Left cardiac atrium (tissue), 4 donors: ENCODE measurements at regions of chr16 and their contacts with region 1.

Region 1: DNA sequence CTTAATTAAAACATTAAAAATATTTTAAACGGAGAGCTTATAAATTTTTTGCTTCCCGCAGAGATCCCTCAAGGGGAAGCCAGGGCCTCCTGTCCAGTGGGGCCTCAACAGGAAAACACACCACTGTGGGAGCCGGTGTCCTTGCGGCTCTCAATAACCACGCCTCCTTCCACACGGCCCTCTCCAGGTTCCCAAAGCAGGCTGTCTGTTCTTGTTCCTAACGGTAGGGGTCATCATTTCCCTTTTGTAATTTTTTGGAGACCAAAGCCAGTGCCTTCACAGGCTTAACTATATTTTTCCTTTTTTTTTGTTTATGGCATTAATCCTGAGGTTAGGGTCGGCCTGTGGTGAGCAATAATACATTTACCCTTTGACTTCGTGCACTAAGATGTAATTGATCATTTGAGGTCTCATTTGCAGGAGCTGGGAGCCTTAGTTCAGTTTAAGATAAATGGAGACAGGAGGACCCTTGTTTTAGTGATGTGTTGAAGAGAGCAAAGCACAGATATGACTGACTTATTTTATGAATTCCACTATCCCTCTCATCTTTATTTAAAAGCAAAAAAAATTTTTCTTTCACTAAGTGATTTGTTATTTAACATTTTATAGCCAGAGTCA is 77.5 kb upstream of the N4BP1 start:
- DNase-seq: peak; percentile 58
- ATAC-seq: peak; percentile 86 to 91

Region 2: DNA sequence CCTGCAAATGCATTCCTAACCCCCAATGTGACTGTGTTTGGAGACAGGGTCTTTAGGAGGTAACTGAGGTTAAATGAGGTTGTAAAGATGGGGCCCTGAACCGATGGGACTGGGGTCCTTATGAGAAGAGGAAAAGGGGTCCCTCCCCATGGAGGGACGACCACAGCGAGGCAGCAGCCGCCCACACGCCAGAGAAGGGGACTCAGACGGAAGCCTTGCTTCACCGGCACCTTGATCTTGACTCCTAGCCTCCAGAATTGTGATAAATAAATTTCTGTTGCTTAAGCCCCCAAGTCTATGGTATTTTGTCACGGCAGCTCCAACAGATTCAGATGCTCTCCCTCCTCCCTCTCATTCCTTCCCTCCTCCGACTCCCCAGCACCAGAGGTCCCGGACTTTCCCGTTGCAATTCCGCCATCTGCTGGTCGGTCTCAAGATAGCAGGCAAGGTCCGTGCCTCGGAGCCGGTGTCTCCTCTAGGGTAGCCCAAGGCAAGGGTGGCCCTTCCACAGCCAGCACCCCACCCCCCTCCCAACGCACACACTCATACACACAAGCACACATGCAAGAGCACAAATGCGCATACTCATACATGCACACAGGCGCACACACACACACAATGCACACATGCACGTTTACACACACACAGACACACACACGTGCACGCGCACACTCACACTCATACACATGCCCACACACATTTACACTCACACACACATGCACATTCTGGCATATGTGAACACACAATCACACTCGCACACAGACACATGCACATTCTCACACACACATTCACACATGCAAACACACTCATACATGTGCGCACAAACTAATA is 663.0 kb after region 1 on chr16:
- intact Hi-C with region 1: loop called (anchors 1 to 5 kb)
- DNase-seq: peak; percentile 57
- ATAC-seq: peak; percentile 44 to 71